ENCODE measurements at regions of chr9 and their contacts with region 1.

Region 1: DNA sequence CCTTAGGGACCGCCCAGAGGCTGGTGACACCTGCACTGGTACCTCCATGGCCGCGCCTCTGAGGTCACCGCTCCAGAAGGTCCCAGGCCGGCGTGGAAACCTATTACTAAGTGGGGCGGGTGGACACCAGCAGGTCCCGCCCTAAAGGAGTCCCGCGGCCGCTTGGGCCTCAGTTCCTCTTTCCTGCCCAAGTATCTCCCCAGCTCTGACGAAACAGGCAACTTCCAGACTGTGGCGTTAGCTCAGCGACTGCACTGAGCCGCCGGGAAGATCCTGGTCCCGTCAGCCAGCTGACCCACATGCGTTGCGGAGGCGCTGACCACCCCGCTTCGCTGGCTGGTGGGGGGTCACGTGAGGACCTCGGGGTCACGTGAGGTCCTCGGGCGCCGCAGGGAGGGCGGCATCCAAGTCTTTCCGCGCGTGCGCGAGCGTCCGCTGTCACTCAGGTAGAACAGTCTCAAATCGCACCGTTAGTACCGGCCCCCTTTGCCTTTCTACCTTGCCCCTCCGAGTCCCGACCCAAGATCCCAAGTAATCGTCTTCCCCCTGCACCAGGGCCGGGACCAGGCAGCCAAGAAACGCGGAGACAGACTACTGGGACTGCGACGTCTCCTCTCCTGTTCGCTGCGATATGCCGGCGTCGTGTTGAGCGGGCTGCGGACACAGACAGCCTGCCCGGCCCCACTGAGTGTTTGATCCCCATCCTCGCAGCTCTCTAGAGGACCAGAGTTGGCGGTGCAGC is 53.7 kb upstream of the KDM4C start:
- DNase-seq: peak; percentile 96
- ATAC-seq: peak; percentile 80
- H3K4me3 ChIP-seq: peak overlapping the region; percentile 70 to 98 (median 75)
- H3K4me3 Mint-ChIP-seq: peak overlapping the region; percentile 99
- H3K27ac ChIP-seq: peak overlapping the region; percentile 98 to 100
- H3K27ac Mint-ChIP-seq: peak overlapping the region; percentile 100
- H3K4me1 ChIP-seq: peaks cover 16 to 28% of the 10 kb centered on the region in 2 donors
- H3K4me1 Mint-ChIP-seq: peaks cover 29% of the 10 kb centered on the region
- H3K27me3 ChIP-seq: no peaks in the 10 kb centered on the region
- H3K27me3 Mint-ChIP-seq: no peaks in the 10 kb centered on the region
- CTCF ChIP-seq: no peak

Region 2: DNA sequence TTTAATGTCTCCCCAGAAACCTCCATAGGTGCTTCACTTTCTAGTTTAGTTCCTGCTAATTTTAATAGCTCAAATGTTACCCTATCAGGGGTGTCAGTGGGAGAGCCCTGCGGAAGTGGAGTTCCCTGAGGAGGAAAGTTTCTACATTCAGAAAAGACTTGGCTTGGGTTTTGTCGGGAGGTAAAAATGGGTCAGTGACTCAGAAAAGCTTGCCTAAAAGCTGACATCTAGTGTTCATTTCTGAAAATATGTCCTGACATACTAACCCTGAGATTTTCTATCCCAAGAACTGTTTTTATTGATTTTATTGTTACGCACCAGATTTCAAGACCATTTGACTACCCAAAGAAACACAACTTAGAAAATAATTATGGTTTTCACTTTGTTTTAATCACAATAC is 17.7 kb before region 1 on chr9:
- CTCF ChIA-PET with region 1: interaction called, 10 read pairs
- POLR2A ChIA-PET with region 1: interaction called, 17 read pairs
- intact Hi-C with region 1: loop called (anchors 1 kb)
- DNase-seq: no peak
- ATAC-seq: no peak
- H3K4me3 ChIP-seq: no peak overlapping the region
- H3K4me3 Mint-ChIP-seq: no peak overlapping the region
- H3K27ac ChIP-seq: peak overlapping the region; percentile 32 to 53
- H3K27ac Mint-ChIP-seq: peak overlapping the region; percentile 28
- H3K4me1 ChIP-seq: peaks cover 62 to 89% of the 10 kb centered on the region in 2 donors
- H3K4me1 Mint-ChIP-seq: peaks cover 48% of the 10 kb centered on the region
- H3K27me3 ChIP-seq: no peaks in the 10 kb centered on the region
- H3K27me3 Mint-ChIP-seq: no peaks in the 10 kb centered on the region
- CTCF ChIP-seq: peak; percentile 23

Region 3: GRCh38 chr9:6811436-6811835 is 107.4 kb after region 1 on chr9:
- CTCF ChIA-PET with region 1: no interaction called
- POLR2A ChIA-PET with region 1: no interaction called
- intact Hi-C with region 1: no loop called
- DNase-seq: no peak
- ATAC-seq: no peak
- H3K4me3 ChIP-seq: no peak overlapping the region
- H3K4me3 Mint-ChIP-seq: no peak overlapping the region
- H3K27ac ChIP-seq: no peak overlapping the region
- H3K27ac Mint-ChIP-seq: no peak overlapping the region
- H3K4me1 ChIP-seq: peaks cover 0 to 3% of the 10 kb centered on the region in 2 donors
- H3K4me1 Mint-ChIP-seq: peaks cover 10% of the 10 kb centered on the region
- H3K27me3 ChIP-seq: no peaks in the 10 kb centered on the region
- H3K27me3 Mint-ChIP-seq: no peaks in the 10 kb centered on the region
- CTCF ChIP-seq: no peak